HAP-1 (cell line): ENCODE measurements at regions of chr2 and their contacts with region 1.

Region 1: GRCh38 chr2:100416935-100417710 is at the start of gene CHST10:
- DNase-seq: peak; percentile 32 to 78
- H3K4me3 ChIP-seq: peak within 1 kb of the TSS; percentile 61
- H3K4me1 ChIP-seq: peaks cover 38% of the 10 kb centered on the region
- H3K27me3 ChIP-seq: no peaks in the 10 kb centered on the region

Region 2: DNA sequence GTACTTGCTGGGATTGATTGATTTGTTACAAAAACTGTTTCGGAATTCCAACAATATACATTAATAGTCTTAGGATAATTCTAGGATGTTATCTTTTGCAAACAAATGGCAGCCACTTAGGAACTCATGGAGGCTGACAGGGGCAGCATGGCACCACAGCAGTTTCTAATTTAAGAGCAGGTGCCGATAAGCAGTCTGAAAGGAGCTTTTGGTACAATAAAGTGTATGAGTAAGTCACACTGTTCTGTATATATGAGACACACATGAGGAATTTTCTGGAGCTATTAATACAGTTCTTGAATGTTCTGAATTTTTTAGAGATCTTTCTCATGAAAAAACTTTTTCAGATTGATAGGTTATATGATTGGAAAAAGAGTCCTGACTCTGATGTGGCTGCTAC is 1027.8 kb before region 1 on chr2:
- in situ Hi-C with region 1: no loop called
- DNase-seq: no peak
- H3K4me3 ChIP-seq: no peak overlapping the region
- H3K4me1 ChIP-seq: no peaks in the 10 kb centered on the region
- H3K27me3 ChIP-seq: no peaks in the 10 kb centered on the region

Region 3: GRCh38 chr2:100292022-100292580 is 125.0 kb before region 1 on chr2:
- in situ Hi-C with region 1: no loop called
- DNase-seq: peak; percentile 18 to 50
- H3K4me3 ChIP-seq: no peak overlapping the region
- H3K4me1 ChIP-seq: peaks cover 6% of the 10 kb centered on the region
- H3K27me3 ChIP-seq: no peaks in the 10 kb centered on the region

Region 4: DNA sequence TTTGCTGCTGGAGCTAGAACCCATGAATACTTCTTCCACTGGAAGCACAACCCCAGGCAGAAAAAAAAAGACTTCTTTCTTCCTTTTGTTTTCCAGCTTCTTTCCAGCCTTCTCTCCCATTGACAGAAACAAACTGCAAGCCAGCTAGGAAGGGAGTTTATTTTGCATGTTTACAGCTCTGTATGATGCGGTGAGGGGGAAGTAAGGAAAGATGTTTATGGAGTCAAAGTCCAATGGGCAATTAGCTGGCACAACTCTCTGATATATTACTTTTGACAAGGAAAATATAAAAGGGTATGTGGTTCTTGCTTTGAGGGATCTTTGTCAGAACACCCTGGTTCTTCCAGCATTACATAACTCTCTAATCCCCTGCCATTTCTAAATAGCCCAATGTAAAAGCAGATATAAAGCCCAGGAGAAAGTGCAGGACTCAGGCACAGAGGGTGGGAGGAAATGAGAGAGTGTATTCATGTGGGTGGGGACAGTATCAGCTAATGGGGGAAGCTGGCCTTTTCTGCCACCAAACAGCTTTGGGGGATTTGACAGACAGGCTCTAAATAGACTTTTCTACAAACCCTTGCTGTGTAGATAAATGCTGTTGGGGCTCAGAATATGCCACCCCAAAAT is 43.9 kb after region 1 on chr2:
- in situ Hi-C with region 1: no loop called
- DNase-seq: no peak
- H3K4me3 ChIP-seq: no peak overlapping the region
- H3K4me1 ChIP-seq: no peaks in the 10 kb centered on the region
- H3K27me3 ChIP-seq: no peaks in the 10 kb centered on the region

Region 5: DNA sequence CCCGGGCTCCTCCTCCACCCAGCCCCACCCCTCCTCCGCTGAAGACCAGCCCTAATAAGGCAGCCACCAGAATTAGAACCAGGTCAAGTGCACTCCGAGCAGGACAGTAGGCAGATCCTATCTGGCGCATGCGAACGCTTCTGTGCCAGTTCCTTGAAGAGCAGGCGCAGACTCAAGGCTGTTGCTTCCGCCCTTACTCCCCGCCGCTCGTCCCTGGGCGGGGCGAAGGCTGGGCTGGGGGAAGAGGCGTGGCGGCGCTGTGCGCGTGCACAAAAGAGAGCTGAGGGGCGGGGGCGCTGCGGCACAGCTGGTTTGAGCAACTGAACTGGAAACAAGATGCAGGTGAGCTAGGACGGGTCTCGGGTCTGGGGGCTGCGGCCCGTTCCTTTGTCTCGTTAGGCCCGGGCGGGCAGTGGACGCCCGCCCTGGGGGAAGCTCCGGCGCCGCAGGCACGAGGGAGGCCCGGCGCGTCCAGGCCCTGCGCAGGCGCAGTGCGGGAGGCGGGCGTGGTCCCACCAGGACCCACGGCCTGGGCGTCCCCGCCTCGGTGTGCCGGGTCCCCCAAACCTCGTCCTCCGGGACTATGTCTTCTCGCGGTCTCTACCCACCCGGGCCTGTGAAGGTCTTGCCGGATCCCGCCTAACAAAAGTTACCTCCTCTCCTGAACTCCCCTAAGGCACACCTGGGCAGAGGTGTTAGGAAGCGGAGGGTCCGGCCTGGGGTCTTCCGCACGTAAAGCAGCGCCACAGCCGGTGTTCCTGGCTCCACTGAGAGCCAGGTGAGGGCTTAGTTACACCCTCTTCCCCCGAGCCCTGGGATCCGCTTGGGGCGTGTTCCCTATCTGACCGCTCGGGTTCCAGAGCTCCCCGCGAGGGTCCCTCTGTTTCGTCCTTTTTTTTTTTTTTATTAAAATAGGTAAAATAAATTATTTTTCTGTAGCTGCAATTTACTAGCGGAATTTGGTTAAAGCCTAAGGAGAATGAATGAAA is 145.9 kb after region 1 on chr2 and contains the start of gene PDCL3:
- in situ Hi-C with region 1: loop called (anchors 5 kb)
- DNase-seq: peak; percentile 94 to 95
- H3K4me3 ChIP-seq: peak within 1 kb of the TSS; percentile 76
- H3K4me1 ChIP-seq: peaks cover 4% of the 10 kb centered on the region
- H3K27me3 ChIP-seq: no peaks in the 10 kb centered on the region

Region 6: GRCh38 chr2:100984892-100985379 is 567.8 kb after region 1 on chr2:
- in situ Hi-C with region 1: loop called (anchors 25 kb)
- DNase-seq: peak; percentile 67 to 85
- H3K4me3 ChIP-seq: no peak overlapping the region
- H3K4me1 ChIP-seq: no peaks in the 10 kb centered on the region
- H3K27me3 ChIP-seq: no peaks in the 10 kb centered on the region